ENCODE measurements at regions of chr22 and their contacts with region 1.

Region 1: DNA sequence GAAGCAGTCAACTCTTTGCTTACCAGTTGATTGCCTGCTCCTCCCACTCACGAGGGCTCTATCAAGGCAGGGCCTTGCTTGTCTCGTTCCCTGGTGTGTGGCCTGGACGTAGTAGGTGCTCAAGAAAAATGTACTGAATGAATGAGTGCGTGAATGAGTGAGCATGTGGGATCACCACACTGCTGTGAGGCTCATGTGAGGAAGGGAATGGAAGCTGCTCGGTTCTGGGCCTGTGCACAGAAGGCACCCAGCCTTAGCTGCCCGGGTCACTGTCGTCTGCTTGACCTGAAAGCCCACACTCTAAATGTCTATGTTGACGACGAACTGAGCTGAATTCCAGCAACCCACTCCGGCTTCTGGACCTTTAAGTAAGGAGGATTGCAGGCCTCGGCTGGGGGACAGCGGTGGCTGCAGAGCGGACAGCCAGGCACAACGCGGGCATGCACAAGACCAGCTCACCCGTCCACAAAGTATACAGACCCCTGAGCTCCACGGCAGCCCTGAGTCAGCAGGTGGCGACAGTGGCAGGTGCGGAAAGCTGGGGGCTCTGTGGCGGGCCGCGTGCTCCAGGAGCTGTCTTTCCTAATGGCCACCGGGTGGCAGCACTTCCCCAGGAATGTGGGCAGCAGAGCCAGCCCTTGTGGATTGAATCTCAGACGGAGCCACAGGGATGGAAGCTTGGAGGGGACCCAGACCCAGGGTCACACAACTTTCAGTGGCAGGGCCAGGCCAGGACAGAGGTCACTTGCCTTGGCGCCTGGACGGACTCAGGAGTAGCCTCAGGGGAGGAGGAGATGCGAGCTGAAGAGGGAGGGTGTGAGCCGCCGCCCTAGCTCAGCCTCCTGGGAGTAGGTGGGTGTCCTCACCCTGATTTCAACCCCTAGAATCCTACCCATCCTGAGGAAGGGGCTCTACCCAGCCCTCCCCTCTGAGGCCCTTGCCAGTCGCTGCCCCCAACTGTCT is 5.0 kb upstream of the PICK1 start:
- DNase-seq: peak; percentile 64 to 91 (median 81)
- ATAC-seq: peak; percentile 60 to 87 (median 82)
- H3K4me3 ChIP-seq: no peak overlapping the region
- H3K27ac ChIP-seq: no peak overlapping the region
- H3K4me1 ChIP-seq: no peaks in the 10 kb centered on the region
- H3K27me3 ChIP-seq: no peaks in the 10 kb centered on the region
- CTCF ChIP-seq: peak; percentile 81 to 87 (median 84)

Region 2: GRCh38 chr22:37862570-37863325 is 189.4 kb before region 1 on chr22:
- intact Hi-C with region 1: no loop called
- DNase-seq: no peak
- ATAC-seq: peak; percentile 34 to 43 (median 38)
- H3K4me3 ChIP-seq: no peak overlapping the region
- H3K27ac ChIP-seq: peak overlapping the region in 2 of 4 donors; percentile 69 to 77
- H3K4me1 ChIP-seq: peaks cover 10 to 51% (median 40%) of the 10 kb centered on the region in 3 donors
- H3K27me3 ChIP-seq: no peaks in the 10 kb centered on the region
- CTCF ChIP-seq: no peak

Region 3: DNA sequence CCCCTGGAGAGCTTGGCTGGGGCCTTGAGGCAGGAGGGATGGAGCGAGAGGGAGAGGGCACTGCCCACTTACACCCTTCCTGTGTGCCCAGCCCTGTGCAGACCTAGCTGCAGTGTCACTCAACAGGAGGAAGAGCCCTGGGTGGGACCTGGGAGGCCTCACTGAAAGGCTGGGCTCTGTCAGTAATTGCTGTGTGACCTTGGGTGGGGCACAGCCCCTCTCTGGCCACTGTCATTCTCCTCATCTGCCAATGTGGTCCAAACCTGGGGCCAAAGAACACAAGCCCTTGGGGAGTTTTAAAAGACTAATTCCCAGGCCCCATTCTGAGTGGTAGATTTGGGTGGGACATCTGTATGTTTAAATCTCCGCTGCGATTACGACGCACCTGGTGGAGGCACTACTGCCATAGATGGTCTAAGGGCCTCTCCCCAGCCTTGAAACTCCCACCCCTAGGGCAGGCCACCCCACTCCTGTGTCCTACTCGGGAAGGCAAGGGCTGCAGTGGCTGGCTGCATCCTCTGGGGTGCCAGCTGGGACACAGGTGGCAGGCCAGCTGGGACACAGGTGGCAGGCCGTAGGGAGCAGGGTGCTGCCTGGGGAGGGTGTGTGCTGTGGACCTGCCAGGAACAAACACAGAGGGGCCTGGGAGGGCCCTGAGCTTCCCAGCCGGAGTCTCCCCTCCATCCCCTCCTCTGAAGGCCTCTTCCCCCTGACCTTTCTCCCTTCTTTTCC is 55.5 kb before region 1 on chr22:
- intact Hi-C with region 1: no loop called
- DNase-seq: no peak
- ATAC-seq: peak in 1 of 4 donors; percentile 28
- H3K4me3 ChIP-seq: no peak overlapping the region
- H3K27ac ChIP-seq: no peak overlapping the region
- H3K4me1 ChIP-seq: peaks cover 0 to 3% (median 0%) of the 10 kb centered on the region in 3 donors
- H3K27me3 ChIP-seq: no peaks in the 10 kb centered on the region
- CTCF ChIP-seq: no peak

Region 4: DNA sequence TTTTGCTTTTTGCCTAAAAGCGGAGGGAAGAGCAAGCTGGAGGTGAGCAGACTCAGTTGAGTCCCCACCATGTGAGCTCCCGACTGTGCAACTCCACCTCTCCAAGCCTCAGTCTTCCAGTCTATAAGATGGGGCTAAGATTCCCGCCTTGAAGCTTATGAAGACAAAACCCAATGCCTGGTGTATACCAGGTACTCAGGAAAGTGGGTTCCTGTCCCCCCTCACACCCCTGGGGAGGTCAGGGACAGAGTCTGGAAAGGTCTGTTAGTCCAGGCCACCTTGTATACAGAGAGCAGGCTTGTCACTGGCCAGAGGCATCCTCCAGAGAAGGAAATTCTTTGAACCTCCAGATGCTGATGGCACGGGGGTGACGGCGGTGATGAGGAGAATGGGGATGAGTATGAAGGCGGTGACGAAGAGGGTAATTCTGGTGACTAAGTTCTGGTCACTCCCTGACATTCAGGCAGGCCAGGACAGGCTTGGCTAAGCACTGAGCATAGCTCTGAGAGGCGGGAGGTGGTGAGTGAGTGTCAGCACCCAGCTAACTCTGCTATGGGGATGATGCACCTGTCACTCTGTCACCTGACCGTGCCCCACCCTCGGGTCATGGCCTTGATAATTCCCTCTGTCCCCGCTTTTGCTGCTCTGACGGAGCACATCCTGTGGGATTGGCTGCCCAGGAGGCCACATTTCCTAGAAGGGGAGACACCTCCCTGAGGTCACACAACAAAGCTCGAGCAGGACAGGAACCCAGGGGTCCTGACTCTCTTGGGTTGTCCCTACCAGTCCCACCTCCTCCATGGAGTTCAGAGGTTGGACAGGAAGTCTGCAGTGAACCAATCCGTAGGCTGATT is 295.9 kb after region 1 on chr22:
- intact Hi-C with region 1: loop called in 1 of 3 experiments (anchors 5 kb)
- DNase-seq: peak in 3 of 6 donors; percentile 9 to 47 (median 20)
- ATAC-seq: no peak
- H3K4me3 ChIP-seq: no peak overlapping the region
- H3K27ac ChIP-seq: no peak overlapping the region
- H3K4me1 ChIP-seq: no peaks in the 10 kb centered on the region
- H3K27me3 ChIP-seq: no peaks in the 10 kb centered on the region
- CTCF ChIP-seq: no peak

Region 5: GRCh38 chr22:38569972-38570778 is 518.0 kb after region 1 on chr22 and contains the start of gene DMC1:
- intact Hi-C with region 1: loop called in 1 of 3 experiments (anchors 5 kb)
- DNase-seq: peak; percentile 93 to 97 (median 96)
- ATAC-seq: peak; percentile 96 to 99 (median 96)
- H3K4me3 ChIP-seq: peak within 1 kb of the TSS; percentile 36 to 60 (median 45)
- H3K27ac ChIP-seq: no peak within 1 kb of the TSS
- H3K4me1 ChIP-seq: peaks cover 0 to 7% (median 4%) of the 10 kb centered on the region in 3 donors
- H3K27me3 ChIP-seq: no peaks in the 10 kb centered on the region
- CTCF ChIP-seq: no peak
- total RNA-seq, gene DMC1: 0.19 to 0.28 (median 0.26) TPM in 3 of 6 donors, not detected in the others

Region 6: DNA sequence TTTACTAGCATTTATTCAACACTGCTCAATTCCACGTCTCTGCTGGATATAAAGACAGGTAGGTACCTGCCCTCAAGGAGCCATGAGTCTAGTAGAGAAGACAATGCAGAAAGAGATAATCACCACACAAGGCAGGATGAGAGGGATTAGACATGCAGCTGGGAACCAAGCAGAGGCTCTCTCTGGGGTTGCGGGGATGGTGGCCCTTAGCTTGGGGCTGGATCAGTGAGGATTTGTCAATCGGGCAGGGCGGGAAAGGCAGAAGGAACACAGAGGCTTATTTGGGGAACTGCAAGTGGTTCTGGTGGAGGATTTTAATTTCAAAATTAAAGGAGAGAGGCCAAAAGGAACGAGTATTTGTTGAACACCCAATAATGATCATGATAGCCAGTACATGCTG is 526.3 kb after region 1 on chr22:
- intact Hi-C with region 1: loop called in 2 of 3 experiments (anchors 5 to 10 kb)
- DNase-seq: no peak
- ATAC-seq: no peak
- H3K4me3 ChIP-seq: no peak overlapping the region
- H3K27ac ChIP-seq: no peak overlapping the region
- H3K4me1 ChIP-seq: no peaks in the 10 kb centered on the region
- H3K27me3 ChIP-seq: no peaks in the 10 kb centered on the region
- CTCF ChIP-seq: no peak

Measured in pancreas (tissue), 10 donors.